B cell (primary cell): ENCODE measurements at regions of chr12 and their contacts with region 1.

Region 1: DNA sequence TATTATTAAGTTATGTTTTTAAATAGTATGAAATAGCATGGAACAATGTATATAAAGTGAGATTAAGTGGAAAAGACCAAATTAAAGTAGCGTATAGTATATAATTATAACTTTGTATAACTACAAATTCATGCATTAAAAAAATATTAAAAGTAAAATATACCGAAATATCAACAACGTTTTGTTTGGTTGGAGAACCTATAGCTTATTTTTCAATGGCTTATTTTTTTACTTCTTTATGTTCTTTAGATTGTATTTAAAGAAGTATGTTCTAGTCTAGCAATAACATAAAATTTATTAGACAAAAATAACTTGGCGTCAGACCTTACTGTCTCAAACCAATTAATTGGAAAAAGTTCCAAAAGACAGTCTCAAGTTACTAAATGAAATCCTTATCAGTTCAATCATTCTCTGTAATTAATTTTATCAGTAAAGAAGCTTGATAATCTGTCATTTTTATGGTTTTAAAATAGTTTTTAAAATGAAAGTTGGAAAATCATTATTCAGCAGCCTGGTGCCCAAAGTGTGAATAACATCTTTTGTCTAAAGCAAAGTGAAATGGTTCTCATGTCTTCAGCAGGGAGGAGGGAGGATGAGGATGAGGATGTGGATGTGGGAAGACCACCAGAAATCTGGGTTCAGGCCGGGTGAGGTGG is 46.7 kb downstream of the IRAK3 start:
- DNase-seq: peak; percentile 34
- ATAC-seq: no peak
- H3K4me3 ChIP-seq: peak overlapping the region; percentile 36 to 76 (median 64)
- H3K4me3 Mint-ChIP-seq: peak overlapping the region; percentile 71
- H3K27ac ChIP-seq: no peak overlapping the region
- H3K27ac Mint-ChIP-seq: no peak overlapping the region
- H3K4me1 ChIP-seq: peaks cover 10 to 23% of the 10 kb centered on the region in 2 donors
- H3K4me1 Mint-ChIP-seq: peaks cover 33% of the 10 kb centered on the region
- H3K27me3 ChIP-seq: no peaks in the 10 kb centered on the region
- H3K27me3 Mint-ChIP-seq: no peaks in the 10 kb centered on the region
- CTCF ChIP-seq: peak; percentile 55

Region 2: GRCh38 chr12:65100140-65100539 is 1135.6 kb before region 1 on chr12:
- CTCF ChIA-PET with region 1: no interaction called
- POLR2A ChIA-PET with region 1: no interaction called
- intact Hi-C with region 1: no loop called
- DNase-seq: no peak
- ATAC-seq: no peak
- H3K4me3 ChIP-seq: no peak overlapping the region
- H3K4me3 Mint-ChIP-seq: no peak overlapping the region
- H3K27ac ChIP-seq: no peak overlapping the region
- H3K27ac Mint-ChIP-seq: no peak overlapping the region
- H3K4me1 ChIP-seq: no peaks in the 10 kb centered on the region
- H3K4me1 Mint-ChIP-seq: no peaks in the 10 kb centered on the region
- H3K27me3 ChIP-seq: peaks cover 0 to 7% (median 3%) of the 10 kb centered on the region in 4 experiments
- H3K27me3 Mint-ChIP-seq: peaks cover 28% of the 10 kb centered on the region
- CTCF ChIP-seq: no peak

Region 3: GRCh38 chr12:66169221-66170170 is 66.3 kb before region 1 on chr12 and contains the start of gene TMBIM4:
- CTCF ChIA-PET with region 1: interaction called, 14 read pairs
- POLR2A ChIA-PET with region 1: interaction called, 19 read pairs
- intact Hi-C with region 1: loop called (anchors 1 kb)
- DNase-seq: peak; percentile 94
- ATAC-seq: peak; percentile 83
- H3K4me3 ChIP-seq: peak within 1 kb of the TSS; percentile 73 to 99 (median 91)
- H3K4me3 Mint-ChIP-seq: peak within 1 kb of the TSS; percentile 89
- H3K27ac ChIP-seq: peak within 1 kb of the TSS; percentile 97
- H3K27ac Mint-ChIP-seq: peak within 1 kb of the TSS; percentile 93
- H3K4me1 ChIP-seq: peaks cover 21 to 30% of the 10 kb centered on the region in 2 donors
- H3K4me1 Mint-ChIP-seq: peaks cover 42% of the 10 kb centered on the region
- H3K27me3 ChIP-seq: no peaks in the 10 kb centered on the region
- H3K27me3 Mint-ChIP-seq: no peaks in the 10 kb centered on the region
- CTCF ChIP-seq: peak; percentile 40
- total RNA-seq, gene TMBIM4: 85.6 and 88.1 TPM in 2 replicates

Region 4: GRCh38 chr12:66188584-66189485 is 46.9 kb before region 1 on chr12 and contains the start of gene IRAK3:
- CTCF ChIA-PET with region 1: interaction called, 3 read pairs
- POLR2A ChIA-PET with region 1: no interaction called
- intact Hi-C with region 1: loop called (anchors 5 kb)
- DNase-seq: peak; percentile 63
- ATAC-seq: peak; percentile 63
- H3K4me3 ChIP-seq: peak within 1 kb of the TSS; percentile 55 to 93 (median 65)
- H3K4me3 Mint-ChIP-seq: peak within 1 kb of the TSS; percentile 86
- H3K27ac ChIP-seq: peak within 1 kb of the TSS; percentile 78 to 81
- H3K27ac Mint-ChIP-seq: peak within 1 kb of the TSS; percentile 76
- H3K4me1 ChIP-seq: peaks cover 20 to 53% of the 10 kb centered on the region in 2 donors
- H3K4me1 Mint-ChIP-seq: peaks cover 37% of the 10 kb centered on the region
- H3K27me3 ChIP-seq: peaks cover 0 to 26% (median 2%) of the 10 kb centered on the region in 4 experiments
- H3K27me3 Mint-ChIP-seq: peaks cover 49% of the 10 kb centered on the region
- CTCF ChIP-seq: no peak
- total RNA-seq, gene IRAK3: 3.9 and 4.2 TPM in 2 replicates

Region 5: DNA sequence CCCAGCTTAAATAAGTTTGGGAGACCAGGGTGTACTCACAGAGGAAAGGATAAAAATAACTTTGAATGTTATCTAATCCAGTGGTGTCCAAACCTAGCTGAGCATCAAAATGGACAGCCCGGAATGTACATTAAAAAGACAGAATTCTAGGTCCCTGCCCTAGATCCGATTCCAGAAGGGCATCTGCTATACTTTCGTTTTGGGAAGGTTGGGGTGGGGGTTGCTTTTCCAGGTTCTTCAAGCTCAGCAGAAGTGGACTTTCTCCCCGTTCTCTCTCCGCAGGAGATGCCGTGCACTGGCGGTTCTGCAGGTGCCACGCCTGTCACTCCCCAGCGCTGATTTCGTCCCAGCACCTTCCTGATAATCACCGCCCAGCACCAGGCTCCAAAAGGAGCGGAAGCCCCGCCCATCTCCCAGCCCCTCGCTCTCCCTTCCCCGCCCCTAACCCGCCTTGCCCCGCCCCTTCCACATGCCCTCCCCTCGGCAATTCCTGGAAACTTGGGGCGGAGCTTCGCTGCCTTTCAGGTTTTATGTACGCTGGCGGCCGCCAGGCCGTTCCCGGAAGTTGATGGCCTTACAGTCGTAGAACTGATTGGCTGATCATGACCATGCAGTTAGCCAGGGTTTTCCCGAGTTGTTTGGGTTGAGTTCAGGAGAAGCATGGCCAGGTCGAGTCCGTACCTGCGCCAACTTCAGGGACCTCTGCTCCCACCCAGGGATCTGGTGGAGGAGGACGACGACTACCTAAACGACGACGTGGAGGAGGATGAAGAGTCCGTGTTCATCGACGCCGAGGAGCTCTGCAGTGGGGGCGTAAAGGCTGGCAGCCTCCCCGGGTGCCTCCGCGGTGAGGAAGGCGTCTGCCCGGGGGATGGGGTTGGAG is 66.4 kb after region 1 on chr12 and contains the start of gene HELB:
- CTCF ChIA-PET with region 1: interaction called, 4 read pairs
- POLR2A ChIA-PET with region 1: interaction called, 6 read pairs
- intact Hi-C with region 1: loop called (anchors 1 kb)
- DNase-seq: peak; percentile 92
- ATAC-seq: peak; percentile 95
- H3K4me3 ChIP-seq: peak within 1 kb of the TSS; percentile 69 to 99 (median 92)
- H3K4me3 Mint-ChIP-seq: peak within 1 kb of the TSS; percentile 99
- H3K27ac ChIP-seq: peak within 1 kb of the TSS; percentile 68
- H3K27ac Mint-ChIP-seq: peak within 1 kb of the TSS; percentile 94
- H3K4me1 ChIP-seq: peaks cover 10 to 15% of the 10 kb centered on the region in 2 donors
- H3K4me1 Mint-ChIP-seq: peaks cover 36% of the 10 kb centered on the region
- H3K27me3 ChIP-seq: no peaks in the 10 kb centered on the region
- H3K27me3 Mint-ChIP-seq: peaks cover 4% of the 10 kb centered on the region
- CTCF ChIP-seq: no peak
- total RNA-seq, gene HELB: 10.0 and 11.8 TPM in 2 replicates

Region 6: GRCh38 chr12:66321435-66321834 is 85.7 kb after region 1 on chr12:
- CTCF ChIA-PET with region 1: no interaction called
- POLR2A ChIA-PET with region 1: no interaction called
- intact Hi-C with region 1: no loop called
- DNase-seq: no peak
- ATAC-seq: no peak
- H3K4me3 ChIP-seq: no peak overlapping the region
- H3K4me3 Mint-ChIP-seq: no peak overlapping the region
- H3K27ac ChIP-seq: no peak overlapping the region
- H3K27ac Mint-ChIP-seq: no peak overlapping the region
- H3K4me1 ChIP-seq: no peaks in the 10 kb centered on the region
- H3K4me1 Mint-ChIP-seq: peaks cover 2% of the 10 kb centered on the region
- H3K27me3 ChIP-seq: no peaks in the 10 kb centered on the region
- H3K27me3 Mint-ChIP-seq: no peaks in the 10 kb centered on the region
- CTCF ChIP-seq: no peak